ENCODE measurements at regions of chr4 and their contacts with region 1.

Region 1: DNA sequence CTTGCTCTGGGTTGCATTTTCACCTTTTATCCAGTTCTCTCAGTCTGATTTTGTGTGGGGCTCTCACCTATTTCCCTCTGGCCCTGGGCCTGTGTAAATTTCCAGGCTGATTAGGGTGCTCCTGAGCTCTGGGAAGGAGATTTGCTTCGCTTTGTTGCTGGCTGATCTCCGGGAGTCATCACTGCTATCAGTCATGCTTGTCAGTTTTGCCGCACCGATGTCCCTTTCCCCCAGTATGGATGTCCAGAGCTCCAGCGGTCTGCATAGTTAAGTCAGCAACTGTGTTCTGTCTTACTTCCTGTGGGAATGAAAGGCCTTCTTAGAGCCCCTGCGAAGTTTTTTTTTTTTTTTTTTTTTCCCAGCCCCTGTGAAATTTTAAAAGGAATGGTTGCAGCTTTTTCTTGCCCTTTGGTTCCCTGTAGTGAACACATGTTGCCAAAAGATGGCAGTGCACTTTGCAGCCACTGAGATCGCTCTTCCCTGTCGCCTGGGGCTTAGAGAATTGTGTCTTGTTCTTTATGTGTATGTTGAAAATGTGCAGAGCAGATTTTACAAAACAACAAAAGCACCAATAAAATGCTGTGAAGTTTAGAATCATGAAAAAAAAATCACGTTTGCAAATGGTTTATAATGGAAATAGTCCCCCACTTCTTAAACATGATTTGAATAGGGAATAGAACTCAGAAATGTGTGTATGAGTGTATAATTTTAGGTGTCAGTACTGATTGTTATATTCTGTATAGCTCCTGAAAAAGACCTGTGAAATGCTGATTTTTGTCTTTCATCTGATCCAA is 109.1 kb upstream of the SLC4A4 start:
- H3K4me3 ChIP-seq: no peak overlapping the region
- H3K27ac ChIP-seq: no peak overlapping the region
- H3K4me1 ChIP-seq: peaks cover 4% of the 10 kb centered on the region
- CTCF ChIP-seq: no peak

Region 2: GRCh38 chr4:71094201-71094600 is 135.5 kb before region 1 on chr4:
- CTCF ChIA-PET with region 1: no interaction called
- POLR2A ChIA-PET with region 1: no interaction called
- H3K4me3 ChIP-seq: no peak overlapping the region
- H3K27ac ChIP-seq: no peak overlapping the region
- H3K4me1 ChIP-seq: no peaks in the 10 kb centered on the region
- CTCF ChIP-seq: no peak

Region 3: GRCh38 chr4:71211748-71212147 is 17.9 kb before region 1 on chr4:
- CTCF ChIA-PET with region 1: interaction called, 13 read pairs
- POLR2A ChIA-PET with region 1: interaction called, 3 read pairs
- H3K4me3 ChIP-seq: no peak overlapping the region
- H3K27ac ChIP-seq: no peak overlapping the region
- H3K4me1 ChIP-seq: 0 out of 2 replicates have a peak, but pooled peaks cover 3% of the 10 kb centered on the region
- CTCF ChIP-seq: no peak

Region 4: DNA sequence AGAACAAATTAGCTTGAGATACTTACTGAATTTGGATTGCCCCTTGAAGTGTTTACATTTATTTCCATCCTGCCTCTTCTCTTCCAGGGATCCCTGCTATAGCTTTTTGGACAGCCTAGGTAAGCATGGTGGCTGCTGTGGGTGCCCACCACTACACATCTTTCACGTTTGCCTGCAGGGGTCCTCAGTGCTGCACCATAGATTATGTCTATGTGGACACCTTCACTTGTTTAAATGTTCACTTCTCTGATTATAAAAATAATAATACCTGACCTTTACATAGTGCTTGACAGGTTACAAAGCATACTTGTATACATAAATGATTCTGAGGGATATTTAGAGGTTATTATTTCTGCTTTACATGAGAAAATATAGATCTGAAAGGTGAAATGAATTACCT is 41.2 kb after region 1 on chr4:
- CTCF ChIA-PET with region 1: interaction called, 19 read pairs
- POLR2A ChIA-PET with region 1: interaction called, 9 read pairs
- H3K4me3 ChIP-seq: no peak overlapping the region
- H3K27ac ChIP-seq: no peak overlapping the region
- H3K4me1 ChIP-seq: 0 out of 2 replicates have a peak, but pooled peaks cover 2% of the 10 kb centered on the region
- CTCF ChIP-seq: no peak